T-cell (primary cell): ENCODE measurements at regions of chr15 and their contacts with region 1.

Region 1: DNA sequence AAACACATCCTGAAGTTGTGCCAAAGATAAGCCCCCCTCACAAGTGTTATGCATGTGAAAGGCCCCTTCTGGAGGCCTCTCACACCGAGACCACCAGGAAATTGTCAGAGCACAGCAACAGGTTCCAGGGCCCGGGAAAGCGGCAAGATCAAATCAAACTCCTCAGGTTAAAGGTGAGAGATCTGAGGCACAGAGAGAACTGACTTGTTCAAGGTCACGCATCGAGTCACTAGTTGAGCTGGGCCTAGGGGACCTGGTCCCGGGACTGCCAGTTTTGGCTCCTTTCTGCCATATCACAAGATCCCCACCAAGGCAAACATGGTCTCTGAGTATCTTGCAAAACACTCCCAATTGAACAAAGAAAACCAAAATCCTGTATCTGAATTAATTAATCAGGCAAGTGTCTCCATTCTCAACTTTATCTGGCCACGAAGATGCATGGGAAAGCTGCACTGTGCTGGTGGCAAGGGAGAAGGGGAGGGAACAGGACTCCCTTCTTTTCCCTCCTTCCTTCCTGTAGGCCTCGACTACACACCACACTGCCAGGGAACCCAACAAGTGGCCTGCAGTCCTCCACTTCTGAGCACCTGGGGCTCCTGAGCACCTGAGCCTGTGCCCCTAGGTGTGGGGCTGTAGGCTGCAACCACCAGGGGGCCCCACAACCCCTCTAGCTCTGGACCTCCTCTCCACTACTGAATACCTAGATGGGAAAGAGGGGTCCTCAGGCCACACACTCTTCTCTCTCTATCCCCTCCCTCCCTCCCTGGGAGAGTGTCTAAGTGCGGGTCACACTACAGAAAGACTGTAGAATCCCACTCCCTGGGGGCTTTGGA is 37.3 kb downstream of the ANP32A start:
- DNase-seq: peak; percentile 24 to 82 (median 64)
- ATAC-seq: peak; percentile 68 to 94 (median 80)
- H3K4me3 ChIP-seq: no peak overlapping the region
- H3K4me3 Mint-ChIP-seq: peak overlapping the region in 1 of 3 donors; percentile 49
- H3K27ac ChIP-seq: no peak overlapping the region
- H3K27ac Mint-ChIP-seq: peak overlapping the region; percentile 81 to 90
- H3K4me1 ChIP-seq: peaks cover 13 to 30% of the 10 kb centered on the region in 2 experiments
- H3K4me1 Mint-ChIP-seq: peaks cover 28 to 37% (median 34%) of the 10 kb centered on the region in 3 donors
- H3K27me3 ChIP-seq: no peaks in the 10 kb centered on the region
- H3K27me3 Mint-ChIP-seq: no peaks in the 10 kb centered on the region

Region 2: GRCh38 chr15:68578174-68578979 is 205.1 kb before region 1 on chr15:
- CTCF ChIA-PET with region 1: no interaction called
- POLR2A ChIA-PET with region 1: no interaction called
- DNase-seq: peak in 8 of 35 experiments; percentile 12 to 29 (median 14)
- ATAC-seq: peak; percentile 32 to 48 (median 38)
- H3K4me3 ChIP-seq: peak overlapping the region; percentile 26 to 71
- H3K4me3 Mint-ChIP-seq: peak overlapping the region; percentile 72 to 78 (median 77)
- H3K27ac ChIP-seq: no peak overlapping the region
- H3K27ac Mint-ChIP-seq: peak overlapping the region in 1 of 2 donors; percentile 43
- H3K4me1 ChIP-seq: peaks cover 0 to 19% of the 10 kb centered on the region in 2 experiments
- H3K4me1 Mint-ChIP-seq: peaks cover 13 to 21% (median 15%) of the 10 kb centered on the region in 3 donors
- H3K27me3 ChIP-seq: peaks cover 0 to 83% of the 10 kb centered on the region in 2 experiments
- H3K27me3 Mint-ChIP-seq: peaks cover 55 to 63% of the 10 kb centered on the region in 2 donors

Region 3: DNA sequence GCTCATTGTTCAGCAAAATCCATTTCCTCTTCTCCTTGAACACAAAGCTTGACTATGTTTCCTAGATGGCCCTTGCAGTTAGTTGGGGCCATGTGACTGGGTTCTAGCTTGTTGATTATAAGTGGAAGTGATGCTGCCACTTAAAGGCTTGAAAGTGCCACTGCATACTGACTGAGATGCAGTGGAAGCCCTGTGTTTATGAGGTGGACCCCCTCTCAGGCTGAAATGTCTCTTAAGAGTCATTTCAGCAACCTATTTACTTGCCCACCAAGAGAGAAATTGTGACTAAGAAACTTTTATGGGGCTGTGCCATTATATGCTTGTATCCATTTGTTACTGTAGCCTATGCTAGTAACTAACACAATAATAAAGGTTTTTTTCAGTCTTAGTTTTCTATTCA is 45.6 kb after region 1 on chr15:
- CTCF ChIA-PET with region 1: interaction called, 5 to 16 read pairs
- POLR2A ChIA-PET with region 1: no interaction called
- DNase-seq: peak in 3 of 35 experiments; percentile 11 to 64 (median 14)
- ATAC-seq: peak; percentile 72 to 85 (median 78)
- H3K4me3 ChIP-seq: no peak overlapping the region
- H3K4me3 Mint-ChIP-seq: no peak overlapping the region
- H3K27ac ChIP-seq: no peak overlapping the region
- H3K27ac Mint-ChIP-seq: no peak overlapping the region
- H3K4me1 ChIP-seq: peaks cover 5 to 11% of the 10 kb centered on the region in 2 experiments
- H3K4me1 Mint-ChIP-seq: peaks cover 11 to 25% (median 15%) of the 10 kb centered on the region in 3 donors
- H3K27me3 ChIP-seq: peaks cover 0 to 5% of the 10 kb centered on the region in 2 experiments
- H3K27me3 Mint-ChIP-seq: peaks cover 0 to under 1% of the 10 kb centered on the region in 2 donors

Region 4: DNA sequence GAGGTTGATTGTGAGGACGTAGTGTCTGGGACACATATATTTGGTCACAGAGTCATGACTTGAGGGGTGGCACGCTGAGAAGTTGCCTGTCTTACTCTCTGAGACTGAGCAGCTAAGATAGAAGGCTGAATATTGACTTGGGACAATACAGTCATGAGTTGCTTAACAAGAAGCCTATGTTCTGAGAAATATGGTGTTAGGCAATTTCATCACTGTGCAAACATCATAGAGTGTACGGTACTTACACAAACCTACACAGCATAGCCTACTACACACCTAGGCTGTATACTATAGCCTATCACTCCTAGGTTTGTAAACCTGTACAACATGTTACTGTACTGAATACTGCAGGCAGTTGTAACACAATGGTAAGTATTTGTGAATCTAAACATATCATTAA is 116.6 kb after region 1 on chr15:
- CTCF ChIA-PET with region 1: no interaction called
- POLR2A ChIA-PET with region 1: no interaction called
- DNase-seq: no peak
- ATAC-seq: no peak
- H3K4me3 ChIP-seq: no peak overlapping the region
- H3K4me3 Mint-ChIP-seq: no peak overlapping the region
- H3K27ac ChIP-seq: no peak overlapping the region
- H3K27ac Mint-ChIP-seq: no peak overlapping the region
- H3K4me1 ChIP-seq: no peaks in the 10 kb centered on the region
- H3K4me1 Mint-ChIP-seq: no peaks in the 10 kb centered on the region
- H3K27me3 ChIP-seq: peaks cover 0 to 14% of the 10 kb centered on the region in 2 experiments
- H3K27me3 Mint-ChIP-seq: peaks cover 11 to 25% of the 10 kb centered on the region in 2 donors